Lower leg skin (tissue), 4 donors: ENCODE measurements at regions of chr4 and their contacts with region 1.

Region 1: GRCh38 chr4:59553063-59553720 is 1646.9 kb upstream of the ADGRL3 start:
- DNase-seq: no peak
- H3K4me3 ChIP-seq: no peak overlapping the region
- CTCF ChIP-seq: no peak
- POLR2A ChIP-seq: no peak

Region 2: DNA sequence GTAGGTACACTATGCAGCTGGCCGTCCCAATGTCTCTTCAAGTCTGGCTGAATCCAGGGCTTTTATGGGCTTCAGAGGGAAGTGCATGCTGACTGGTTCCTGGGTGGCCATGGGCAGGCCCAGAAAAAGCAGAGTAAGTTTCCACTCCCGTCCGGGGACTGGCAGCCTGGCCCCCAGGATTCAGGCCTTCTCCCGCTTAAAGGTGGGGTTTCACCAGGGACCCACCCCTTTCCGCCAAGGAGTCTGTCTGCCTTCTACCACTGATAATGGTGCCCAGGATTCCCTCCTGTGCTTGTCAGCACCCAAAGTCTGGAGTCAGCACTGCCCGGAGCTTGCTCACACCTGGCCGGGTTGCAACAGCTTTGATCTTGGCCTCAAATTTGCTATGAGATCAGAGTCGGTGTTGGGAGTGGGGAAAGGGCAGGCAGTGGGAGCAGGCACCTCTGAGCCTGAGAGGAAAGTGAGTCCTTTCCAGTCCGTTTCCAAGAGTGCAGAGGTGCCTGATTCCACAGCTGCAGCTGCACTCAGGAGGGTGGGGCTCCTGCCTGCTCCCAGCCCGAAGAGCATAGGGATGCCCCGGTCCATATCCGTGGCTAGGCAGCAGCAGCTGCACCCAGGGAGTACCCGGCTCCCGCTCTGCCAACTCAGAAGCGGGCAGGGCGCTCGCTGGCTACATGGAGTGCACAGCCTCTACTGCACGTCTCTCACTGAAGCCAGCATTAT is 302.6 kb after region 1 on chr4:
- intact Hi-C with region 1: loop called (anchors 5 kb)
- DNase-seq: no peak
- H3K4me3 ChIP-seq: no peak overlapping the region
- CTCF ChIP-seq: no peak
- POLR2A ChIP-seq: no peak